ENCODE measurements at regions of chr7 and their contacts with region 1.

Region 1: GRCh38 chr7:92609921-92610518 is 19.8 kb upstream of the FAM133B start:
- DNase-seq: no peak
- H3K4me3 ChIP-seq: no peak overlapping the region
- H3K4me3 Mint-ChIP-seq: no peak overlapping the region
- H3K27ac ChIP-seq: no peak overlapping the region
- H3K27ac Mint-ChIP-seq: no peak overlapping the region
- H3K4me1 ChIP-seq: no peaks in the 10 kb centered on the region
- H3K4me1 Mint-ChIP-seq: peaks cover 2% of the 10 kb centered on the region
- H3K27me3 ChIP-seq: no peaks in the 10 kb centered on the region
- H3K27me3 Mint-ChIP-seq: no peaks in the 10 kb centered on the region
- CTCF ChIP-seq: peak; percentile 64

Region 2: GRCh38 chr7:92567460-92567859 is 42.6 kb before region 1 on chr7:
- intact Hi-C with region 1: no loop called
- DNase-seq: no peak
- H3K4me3 ChIP-seq: no peak overlapping the region
- H3K4me3 Mint-ChIP-seq: no peak overlapping the region
- H3K27ac ChIP-seq: no peak overlapping the region
- H3K27ac Mint-ChIP-seq: no peak overlapping the region
- H3K4me1 ChIP-seq: peaks cover 0 to 4% of the 10 kb centered on the region in 2 donors
- H3K4me1 Mint-ChIP-seq: peaks cover 9% of the 10 kb centered on the region
- H3K27me3 ChIP-seq: no peaks in the 10 kb centered on the region
- H3K27me3 Mint-ChIP-seq: no peaks in the 10 kb centered on the region
- CTCF ChIP-seq: no peak

Region 3: GRCh38 chr7:93055543-93056107 is 445.6 kb after region 1 on chr7:
- intact Hi-C with region 1: loop called (anchors 10 kb)
- DNase-seq: peak; percentile 12 to 52 (median 35)
- H3K4me3 ChIP-seq: no peak overlapping the region
- H3K4me3 Mint-ChIP-seq: no peak overlapping the region
- H3K27ac ChIP-seq: no peak overlapping the region
- H3K27ac Mint-ChIP-seq: peak overlapping the region in 1 of 7 donors; percentile 42
- H3K4me1 ChIP-seq: peaks cover 10 to 11% of the 10 kb centered on the region in 2 donors
- H3K4me1 Mint-ChIP-seq: peaks cover 13% of the 10 kb centered on the region
- H3K27me3 ChIP-seq: no peaks in the 10 kb centered on the region
- H3K27me3 Mint-ChIP-seq: peaks cover 0 to 2% (median 0%) of the 10 kb centered on the region in 3 donors
- CTCF ChIP-seq: peak; percentile 92

Measured in CD14-positive monocyte (primary cell).